Activated CD8-positive, alpha-beta memory T cell treated with anti-CD3 and anti-CD28 coated beads, Interleukin-2, amount 10 ng/mL, durations not matched to agents 7 days and 5 days (primary cell): ENCODE measurements at regions of chr1 and their contacts with region 1.

Region 1: GRCh38 chr1:41683681-41684500 is 199.4 kb upstream of the EDN2 start:
- DNase-seq: peak; percentile 83
- ATAC-seq: peak; percentile 70
- H3K4me3 Mint-ChIP-seq: peak overlapping the region; percentile 42
- H3K27ac Mint-ChIP-seq: peak overlapping the region; percentile 86
- H3K4me1 Mint-ChIP-seq: peaks cover 96% of the 10 kb centered on the region
- H3K27me3 Mint-ChIP-seq: no peaks in the 10 kb centered on the region

Region 2: GRCh38 chr1:41662061-41662764 is 21.7 kb before region 1 on chr1:
- CTCF ChIA-PET with region 1: interaction called, 32 read pairs
- DNase-seq: peak; percentile 85
- ATAC-seq: peak; percentile 87
- H3K4me3 Mint-ChIP-seq: peak overlapping the region; percentile 19
- H3K27ac Mint-ChIP-seq: no peak overlapping the region
- H3K4me1 Mint-ChIP-seq: peaks cover 69% of the 10 kb centered on the region
- H3K27me3 Mint-ChIP-seq: no peaks in the 10 kb centered on the region